Tibial artery (tissue), 4 donors: ENCODE measurements at regions of chr2 and their contacts with region 1.

Region 1: GRCh38 chr2:30686000-30686399 is 121.2 kb downstream of the CAPN13 start:
- DNase-seq: no peak
- H3K4me3 ChIP-seq: no peak overlapping the region
- H3K27ac ChIP-seq: peak overlapping the region in 1 of 2 donors; percentile 87
- H3K4me1 ChIP-seq: peaks cover 0 to 51% (median 40%) of the 10 kb centered on the region in 4 donors
- H3K27me3 ChIP-seq: no peaks in the 10 kb centered on the region
- CTCF ChIP-seq: no peak

Region 2: DNA sequence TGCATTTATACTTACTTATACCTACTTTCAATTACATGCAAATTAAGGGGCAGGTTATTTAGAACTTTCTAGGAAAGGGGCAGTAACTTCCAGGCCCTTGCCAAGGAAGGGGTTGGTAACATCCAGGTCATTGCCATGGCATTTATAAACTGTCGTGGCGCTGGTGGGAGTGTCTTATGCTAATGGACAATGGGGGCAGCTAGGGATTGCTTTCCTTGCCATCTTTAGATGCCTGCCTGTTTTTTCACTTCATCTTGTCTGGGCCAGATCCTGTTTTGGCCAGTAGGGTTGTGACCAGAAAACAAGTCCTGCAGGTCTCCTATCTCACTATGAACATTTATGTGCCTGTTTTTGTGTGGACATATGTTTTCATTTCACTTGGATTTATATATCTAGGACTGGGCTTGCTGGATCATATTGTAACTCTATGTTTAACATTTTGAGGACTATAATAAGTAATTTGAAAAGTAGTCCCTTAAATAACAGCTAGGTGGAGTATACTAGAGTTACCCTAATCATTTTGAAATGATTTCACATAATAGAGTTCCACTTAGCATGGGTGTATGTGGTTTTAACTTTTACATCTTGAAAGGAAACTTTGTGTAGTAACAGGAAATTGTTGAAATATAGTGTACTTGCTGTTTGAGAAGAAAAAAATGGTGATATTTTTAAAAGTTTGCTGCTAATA is 182.8 kb before region 1 on chr2:
- intact Hi-C with region 1: loop called (anchors 10 kb)
- DNase-seq: no peak
- H3K4me3 ChIP-seq: no peak overlapping the region
- H3K27ac ChIP-seq: peak overlapping the region; percentile 31 to 54
- H3K4me1 ChIP-seq: peaks cover 0 to 41% (median 3%) of the 10 kb centered on the region in 4 donors
- H3K27me3 ChIP-seq: no peaks in the 10 kb centered on the region
- CTCF ChIP-seq: peak; percentile 29 to 33